Spleen (tissue), 13 donors: ENCODE measurements at regions of chr13 and their contacts with region 1.

Region 1: GRCh38 chr13:98653463-98653985 is 76.6 kb upstream of the STK24 start:
- DNase-seq: peak; percentile 85
- H3K4me3 ChIP-seq: peak overlapping the region in 1 of 8 donors; percentile 14
- H3K27ac ChIP-seq: no peak overlapping the region
- H3K4me1 ChIP-seq: peaks cover 0 to 18% (median 6%) of the 10 kb centered on the region in 6 donors
- H3K27me3 ChIP-seq: no peaks in the 10 kb centered on the region
- CTCF ChIP-seq: peak; percentile 59 to 92 (median 84)
- POLR2A ChIP-seq: no peak

Region 2: DNA sequence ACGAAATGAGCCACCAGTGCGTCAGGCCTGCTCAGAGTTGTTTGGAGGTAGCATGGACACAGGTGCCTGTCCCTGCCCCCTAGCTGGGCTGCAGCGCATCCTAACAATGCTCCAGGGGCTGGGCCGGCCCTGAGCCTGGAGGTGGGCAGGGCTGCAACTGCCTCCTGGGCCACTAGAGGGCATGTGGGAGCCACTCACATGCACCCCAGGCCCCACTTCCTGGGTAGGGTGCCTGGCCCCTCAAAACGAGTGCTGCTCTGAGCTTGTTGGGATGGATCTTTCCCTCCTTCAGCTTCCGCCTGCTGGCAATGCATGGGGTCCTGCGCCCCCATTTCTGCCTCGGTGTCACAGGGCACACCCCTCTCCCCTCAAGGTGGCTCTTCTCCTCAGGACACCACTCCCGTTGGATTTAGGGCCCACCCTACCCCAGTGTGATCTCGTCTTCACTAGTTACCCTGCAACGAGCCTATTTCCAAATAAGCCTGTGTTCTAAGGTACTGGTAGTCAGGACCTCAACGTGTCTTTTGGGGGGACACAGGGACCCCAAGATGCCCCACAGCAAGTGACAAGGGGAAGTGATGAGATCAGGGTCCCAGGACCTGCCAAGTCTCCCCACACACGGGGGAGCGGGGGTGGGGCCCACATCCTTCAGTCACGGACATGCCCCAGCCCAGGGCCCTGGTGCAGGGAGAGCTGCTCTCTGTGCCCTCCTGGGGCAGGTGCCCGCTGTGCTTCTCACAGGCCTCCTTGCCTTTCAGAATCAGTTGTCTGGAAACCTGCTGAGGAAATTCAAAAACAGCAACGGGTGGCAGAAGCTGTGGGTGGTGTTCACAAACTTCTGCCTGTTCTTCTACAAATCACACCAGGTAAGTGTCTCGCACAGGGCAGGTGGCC is 207.9 kb before region 1 on chr13:
- intact Hi-C with region 1: loop called (anchors 5 kb)
- DNase-seq: peak; percentile 93
- H3K4me3 ChIP-seq: no peak overlapping the region
- H3K27ac ChIP-seq: peak overlapping the region in 7 of 8 donors; percentile 36 to 69 (median 60)
- H3K4me1 ChIP-seq: peaks cover 0 to 37% (median 14%) of the 10 kb centered on the region in 6 donors
- H3K27me3 ChIP-seq: no peaks in the 10 kb centered on the region
- CTCF ChIP-seq: peak; percentile 93 to 99 (median 98)
- POLR2A ChIP-seq: no peak

Region 3: DNA sequence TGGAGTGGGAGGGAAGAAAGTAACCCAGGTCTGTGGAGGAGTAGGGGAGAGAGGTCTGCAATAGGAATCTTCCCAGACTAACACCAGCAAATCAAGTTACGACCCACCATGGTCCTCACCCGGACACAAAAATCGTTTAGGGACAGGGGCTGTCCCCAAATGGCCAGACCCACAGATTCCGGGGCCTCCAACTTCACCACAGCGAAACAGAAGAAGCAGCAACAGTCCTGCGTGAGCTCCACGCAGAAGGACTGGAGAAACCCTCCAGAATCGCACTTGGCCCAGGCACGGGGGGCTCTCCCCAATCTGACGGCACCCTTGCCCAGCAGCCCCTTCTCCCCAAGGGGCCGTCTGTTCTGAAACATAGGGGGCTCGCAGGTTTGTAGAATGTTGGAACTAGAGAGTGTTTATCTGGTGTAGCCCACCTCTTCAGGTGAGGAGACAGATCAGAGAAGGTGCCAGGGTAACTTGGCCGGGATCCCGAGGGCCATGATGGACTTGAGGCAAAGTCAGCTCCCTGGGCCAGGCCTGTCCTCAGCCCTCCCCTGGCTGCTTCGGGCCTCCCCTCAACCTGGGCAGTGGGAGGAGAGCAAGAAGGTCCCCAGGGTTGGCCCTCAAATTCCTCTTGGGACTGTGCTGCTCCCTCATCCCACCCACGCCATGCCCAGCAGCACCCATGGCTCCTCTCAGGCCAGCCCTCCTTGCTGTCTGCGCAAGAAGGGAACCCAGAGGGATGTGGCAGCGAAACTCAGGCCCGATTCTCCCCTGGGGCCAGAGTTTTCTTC is 736.2 kb after region 1 on chr13:
- intact Hi-C with region 1: no loop called
- DNase-seq: no peak
- H3K4me3 ChIP-seq: no peak overlapping the region
- H3K27ac ChIP-seq: no peak overlapping the region
- H3K4me1 ChIP-seq: peaks cover 0 to 57% (median 28%) of the 10 kb centered on the region in 6 donors
- H3K27me3 ChIP-seq: no peaks in the 10 kb centered on the region
- CTCF ChIP-seq: no peak
- POLR2A ChIP-seq: no peak